ENCODE measurements at regions of chr18 and their contacts with region 1.

Region 1: DNA sequence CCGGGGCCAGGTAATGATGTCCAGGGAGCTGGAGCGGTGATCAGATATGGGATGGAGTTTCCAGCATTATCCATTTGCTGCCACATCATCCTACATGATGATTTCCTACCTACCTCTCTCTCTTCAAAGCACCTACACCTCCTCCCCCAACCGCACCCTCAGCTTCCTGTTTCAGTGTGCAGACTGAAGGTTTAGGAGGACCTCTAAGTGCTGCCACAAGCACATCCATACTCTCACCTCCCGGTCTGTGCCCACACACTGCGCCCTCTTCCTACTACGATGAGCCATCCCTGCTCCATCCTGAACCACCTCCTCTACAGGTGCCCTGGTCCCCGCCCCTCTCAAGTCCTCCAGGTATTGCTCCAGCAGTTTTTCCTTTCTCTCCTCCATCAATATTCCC is 123.7 kb downstream of the ALPK2 start:
- DNase-seq: no peak
- H3K4me3 ChIP-seq: no peak overlapping the region
- H3K4me3 Mint-ChIP-seq: no peak overlapping the region
- H3K27ac ChIP-seq: no peak overlapping the region
- H3K27ac Mint-ChIP-seq: no peak overlapping the region
- H3K4me1 ChIP-seq: peaks cover 0 to 3% of the 10 kb centered on the region in 2 donors
- H3K4me1 Mint-ChIP-seq: peaks cover 7% of the 10 kb centered on the region
- H3K27me3 ChIP-seq: no peaks in the 10 kb centered on the region
- H3K27me3 Mint-ChIP-seq: peaks cover 0 to 3% (median 2%) of the 10 kb centered on the region in 3 donors
- CTCF ChIP-seq: no peak

Region 2: GRCh38 chr18:59172664-59173249 is 667.6 kb after region 1 on chr18:
- intact Hi-C with region 1: loop called in 1 of 2 experiments (anchors 5 kb)
- DNase-seq: no peak
- H3K4me3 ChIP-seq: no peak overlapping the region
- H3K4me3 Mint-ChIP-seq: no peak overlapping the region
- H3K27ac ChIP-seq: no peak overlapping the region
- H3K27ac Mint-ChIP-seq: no peak overlapping the region
- H3K4me1 ChIP-seq: no peaks in the 10 kb centered on the region
- H3K4me1 Mint-ChIP-seq: no peaks in the 10 kb centered on the region
- H3K27me3 ChIP-seq: no peaks in the 10 kb centered on the region
- H3K27me3 Mint-ChIP-seq: peaks cover 1 to 5% (median 4%) of the 10 kb centered on the region in 3 donors
- CTCF ChIP-seq: no peak